Ascending aorta (tissue), 2 donors: ENCODE measurements at regions of chr14 and their contacts with region 1.

Region 1: GRCh38 chr14:23366426-23366921 is 1.5 kb upstream of the EFS start:
- DNase-seq: peak in 1 of 2 donors; percentile 83
- H3K4me3 ChIP-seq: peak overlapping the region; percentile 65 to 86
- H3K27ac ChIP-seq: peak overlapping the region; percentile 95 to 97
- H3K4me1 ChIP-seq: peaks cover 5 to 18% of the 10 kb centered on the region in 2 donors
- H3K27me3 ChIP-seq: no peaks in the 10 kb centered on the region
- CTCF ChIP-seq: no peak

Region 2: GRCh38 chr14:22536853-22537338 is 829.6 kb before region 1 on chr14:
- intact Hi-C with region 1: no loop called
- DNase-seq: peak; percentile 71 to 89
- H3K4me3 ChIP-seq: no peak overlapping the region
- H3K27ac ChIP-seq: peak overlapping the region; percentile 51 to 71
- H3K4me1 ChIP-seq: peaks cover 2 to 14% of the 10 kb centered on the region in 2 donors
- H3K27me3 ChIP-seq: no peaks in the 10 kb centered on the region
- CTCF ChIP-seq: no peak

Region 3: GRCh38 chr14:23085458-23085857 is 281.0 kb before region 1 on chr14:
- intact Hi-C with region 1: no loop called
- DNase-seq: no peak
- H3K4me3 ChIP-seq: no peak overlapping the region
- H3K27ac ChIP-seq: no peak overlapping the region
- H3K4me1 ChIP-seq: no peaks in the 10 kb centered on the region
- H3K27me3 ChIP-seq: no peaks in the 10 kb centered on the region
- CTCF ChIP-seq: no peak

Region 4: DNA sequence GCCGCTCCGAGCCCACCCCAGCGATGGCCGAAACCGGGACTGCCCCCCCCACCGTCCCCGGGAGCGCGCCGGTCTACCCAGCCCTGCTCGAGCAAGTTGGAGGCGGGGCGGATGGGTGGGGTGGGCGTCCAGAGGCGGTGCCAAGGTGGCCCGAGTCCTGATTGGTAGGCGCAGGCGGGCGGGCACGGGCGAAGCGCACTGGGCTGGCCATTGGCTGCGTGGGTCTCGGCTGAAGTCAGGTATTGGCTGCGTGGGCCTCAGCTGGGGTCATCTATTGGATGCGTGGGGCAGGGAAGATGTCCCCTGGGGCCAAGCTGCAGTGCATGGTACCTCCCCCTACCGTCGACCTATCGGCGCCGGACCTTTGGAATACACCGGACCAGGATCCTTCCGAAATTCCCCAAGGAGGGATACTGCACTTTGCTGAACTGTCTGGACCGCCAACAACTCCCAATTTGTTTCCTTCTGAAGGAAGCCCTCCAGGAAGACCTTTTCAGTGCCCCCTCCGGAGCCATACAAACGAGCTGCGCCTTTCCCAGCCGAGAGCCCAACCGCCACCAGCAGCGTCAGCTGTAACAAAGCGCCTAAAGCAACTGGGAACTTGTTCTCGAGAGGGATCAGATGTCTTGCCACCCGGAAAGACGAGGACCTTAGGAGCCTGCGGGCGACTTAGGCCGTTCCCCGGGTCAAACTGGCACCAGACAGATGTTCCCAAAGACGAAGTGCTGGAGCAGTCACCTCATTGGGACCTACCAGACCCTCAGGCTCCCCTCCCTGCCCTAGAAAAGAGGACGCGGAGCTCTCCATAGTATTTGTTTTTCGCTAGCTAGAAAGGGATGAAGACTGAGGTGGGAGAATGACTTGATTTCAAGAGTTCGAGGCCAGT is 80.2 kb before region 1 on chr14 and contains the start of gene HOMEZ:
- intact Hi-C with region 1: loop called (anchors 5 kb)
- DNase-seq: peak; percentile 99 to 100
- H3K4me3 ChIP-seq: peak within 1 kb of the TSS; percentile 78 to 100
- H3K27ac ChIP-seq: peak within 1 kb of the TSS; percentile 95 to 99
- H3K4me1 ChIP-seq: peaks cover 0 to 11% of the 10 kb centered on the region in 2 donors
- H3K27me3 ChIP-seq: no peaks in the 10 kb centered on the region
- CTCF ChIP-seq: peak in 2 of 3 experiments; percentile 10
- total RNA-seq, gene HOMEZ: 7.3 TPM

Region 5: DNA sequence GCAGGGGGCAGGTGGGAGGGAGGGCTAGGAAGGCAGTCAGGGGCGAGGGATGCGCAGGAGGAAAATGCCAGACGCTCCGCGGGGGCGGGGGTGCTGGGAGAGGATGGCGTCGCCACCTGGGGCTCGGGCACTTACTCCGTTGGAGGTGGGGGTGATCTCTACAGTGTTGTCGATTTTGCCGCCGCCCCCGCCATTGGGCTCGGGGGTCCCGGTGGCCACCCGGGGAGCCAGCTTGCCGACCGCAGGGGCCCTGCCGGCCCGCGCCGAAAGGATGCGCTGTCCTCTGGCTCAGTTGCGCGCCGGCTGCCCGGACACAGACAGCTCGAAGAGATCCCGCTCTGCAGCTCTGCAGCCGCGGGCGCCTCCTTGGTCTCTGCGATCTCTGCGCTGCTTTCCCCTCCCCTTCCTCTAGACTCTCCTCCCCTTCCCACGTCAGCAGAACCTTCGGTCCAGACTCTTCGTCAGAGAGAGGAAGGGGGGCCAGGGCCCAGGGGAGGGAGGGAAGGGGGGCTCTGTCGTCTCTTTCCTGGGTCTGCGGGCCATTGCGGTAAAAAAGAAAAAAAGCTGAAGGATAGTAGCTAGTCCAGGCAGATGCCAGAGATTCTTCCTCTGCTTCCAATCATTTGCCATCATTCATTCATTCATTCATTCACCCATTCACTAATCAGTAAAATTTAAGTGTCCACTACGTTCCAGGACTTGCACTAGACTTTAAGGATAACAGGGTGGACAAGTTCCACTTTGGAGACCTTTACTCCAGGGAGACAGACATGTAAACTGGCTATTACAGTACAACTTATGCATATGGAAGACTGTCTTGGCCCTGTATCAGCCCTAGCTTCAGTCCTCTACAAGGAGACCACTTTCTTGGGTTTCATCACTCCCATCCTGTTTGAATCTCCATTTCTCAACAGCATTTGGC is 13.7 kb before region 1 on chr14 and contains the start of gene SLC22A17:
- intact Hi-C with region 1: loop called (anchors 1 kb)
- DNase-seq: peak in 1 of 2 donors; percentile 91
- H3K4me3 ChIP-seq: peak within 1 kb of the TSS; percentile 69 to 81
- H3K27ac ChIP-seq: peak within 1 kb of the TSS in 1 of 2 donors; percentile 24
- H3K4me1 ChIP-seq: peaks cover 4 to 9% of the 10 kb centered on the region in 2 donors
- H3K27me3 ChIP-seq: no peaks in the 10 kb centered on the region
- CTCF ChIP-seq: peak in 1 of 3 experiments; percentile 13
- total RNA-seq, gene SLC22A17: 89.7 TPM

Region 6: GRCh38 chr14:23409475-23409874 is 43.0 kb after region 1 on chr14:
- intact Hi-C with region 1: no loop called
- DNase-seq: no peak
- H3K4me3 ChIP-seq: no peak overlapping the region
- H3K27ac ChIP-seq: no peak overlapping the region
- H3K4me1 ChIP-seq: no peaks in the 10 kb centered on the region
- H3K27me3 ChIP-seq: no peaks in the 10 kb centered on the region
- CTCF ChIP-seq: no peak

Region 7: DNA sequence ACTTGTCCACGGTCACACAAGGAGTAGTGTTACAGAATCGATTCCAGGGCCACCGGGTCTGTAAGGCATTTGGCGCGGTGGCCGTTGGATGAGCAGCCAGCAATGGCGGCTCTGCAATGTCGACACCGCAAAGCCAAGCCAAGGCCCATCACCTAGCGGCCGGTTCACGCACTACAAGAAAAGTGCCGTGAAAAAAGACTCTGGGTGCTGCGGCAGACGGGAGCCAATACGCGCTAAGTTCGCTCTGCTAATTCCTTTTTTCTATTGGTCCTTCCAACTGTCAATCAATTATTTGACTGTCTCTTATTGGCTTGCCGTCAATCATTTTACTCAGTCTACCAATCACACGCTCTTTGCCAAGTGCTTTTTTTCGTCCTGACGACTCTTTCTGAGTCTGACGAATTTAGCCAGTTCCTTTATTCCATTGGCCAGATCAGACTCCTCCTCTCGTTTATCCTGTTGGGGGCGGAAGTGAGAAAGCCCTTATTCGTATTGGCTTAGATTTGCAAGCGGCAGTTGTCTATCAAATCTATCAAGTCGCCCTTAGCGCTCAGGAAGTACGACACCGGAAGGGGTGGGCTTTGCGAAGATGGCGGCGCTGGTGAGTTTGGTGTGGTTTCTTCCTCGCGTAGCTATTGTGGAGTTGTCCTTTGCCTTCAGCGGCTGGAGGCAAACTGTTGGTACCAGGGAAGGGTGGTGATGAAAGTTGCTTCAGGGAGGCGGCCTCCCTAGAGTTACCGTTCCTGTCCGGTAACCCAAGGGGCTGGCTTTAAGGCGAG is 102.8 kb after region 1 on chr14 and contains the start of gene NGDN:
- intact Hi-C with region 1: loop called (anchors 5 kb)
- DNase-seq: peak; percentile 89 to 99
- H3K4me3 ChIP-seq: peak within 1 kb of the TSS; percentile 87 to 94
- H3K27ac ChIP-seq: peak within 1 kb of the TSS; percentile 83 to 85
- H3K4me1 ChIP-seq: peaks cover 0 to 7% of the 10 kb centered on the region in 2 donors
- H3K27me3 ChIP-seq: no peaks in the 10 kb centered on the region
- CTCF ChIP-seq: peak; percentile 79 to 85 (median 82)
- total RNA-seq, gene NGDN: 7.8 TPM

Region 8: GRCh38 chr14:23555882-23556699 is 189.6 kb after region 1 on chr14 and contains the start of gene THTPA:
- intact Hi-C with region 1: loop called (anchors 10 kb)
- DNase-seq: peak; percentile 71 to 96
- H3K4me3 ChIP-seq: peak within 1 kb of the TSS; percentile 85 to 89
- H3K27ac ChIP-seq: peak within 1 kb of the TSS; percentile 92 to 97
- H3K4me1 ChIP-seq: peaks cover 5 to 25% of the 10 kb centered on the region in 2 donors
- H3K27me3 ChIP-seq: no peaks in the 10 kb centered on the region
- CTCF ChIP-seq: no peak
- total RNA-seq, gene THTPA: 115 TPM

Region 9: GRCh38 chr14:24431569-24432258 is 1065.2 kb after region 1 on chr14:
- intact Hi-C with region 1: loop called (anchors 10 kb)
- DNase-seq: peak; percentile 70 to 93
- H3K4me3 ChIP-seq: peak overlapping the region; percentile 78 to 92
- H3K27ac ChIP-seq: peak overlapping the region; percentile 88 to 96
- H3K4me1 ChIP-seq: peaks cover 5 to 27% of the 10 kb centered on the region in 2 donors
- H3K27me3 ChIP-seq: no peaks in the 10 kb centered on the region
- CTCF ChIP-seq: peak; percentile 84 to 92 (median 85)